Activated CD4-positive, alpha-beta memory T cell treated with anti-CD3 and anti-CD28 coated beads, Interleukin-2, amount 10 ng/mL, durations not matched to agents 7 days and 5 days (primary cell): ENCODE measurements at regions of chr6 and their contacts with region 1.

Region 1: DNA sequence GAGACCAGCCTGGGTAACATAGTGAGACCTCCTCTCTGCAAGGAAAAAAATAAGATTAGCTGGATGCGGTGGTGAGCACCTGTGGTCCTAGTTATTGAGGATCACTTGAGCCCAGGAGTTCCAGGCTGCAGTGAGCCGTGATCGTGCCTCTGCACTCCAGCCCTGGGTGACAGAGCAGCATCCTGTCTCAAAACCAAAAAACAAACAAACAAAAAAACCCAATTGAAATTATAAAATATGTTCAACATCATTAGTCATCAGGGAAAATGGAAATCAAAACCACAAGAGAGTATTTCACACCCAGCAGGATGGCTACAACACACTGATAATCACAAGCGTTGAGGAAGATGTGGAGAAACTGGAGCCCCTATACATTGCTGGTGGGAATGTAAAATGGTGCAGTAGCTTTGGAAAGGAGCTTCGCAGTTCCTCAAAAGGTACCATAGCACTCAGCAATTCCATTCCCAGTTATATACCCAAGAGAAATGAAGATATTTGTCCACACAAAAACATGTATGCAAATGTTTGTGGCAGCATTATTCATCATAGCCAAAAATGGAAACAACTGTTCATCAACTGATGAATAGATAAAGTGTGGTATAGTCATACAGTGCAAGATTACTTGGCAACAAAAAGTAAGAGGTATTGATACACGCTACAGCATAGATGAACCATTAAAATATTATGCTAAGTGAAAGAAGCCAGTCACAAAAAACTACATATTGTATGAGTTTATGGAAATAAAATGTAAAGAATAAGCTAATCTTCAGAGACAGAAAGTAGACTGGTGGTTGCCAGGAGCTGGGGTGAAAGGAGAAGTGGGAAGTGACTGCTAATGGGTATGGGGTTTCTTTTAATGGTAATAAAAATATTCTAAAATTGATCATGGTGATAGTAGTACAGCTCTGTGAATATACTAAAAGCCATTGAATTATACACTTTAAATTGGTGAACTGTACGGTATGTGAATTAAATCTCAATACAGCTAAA is 38.7 kb upstream of the RIPOR2 start:
- DNase-seq: peak; percentile 64
- H3K4me3 Mint-ChIP-seq: peak overlapping the region; percentile 32
- H3K27ac Mint-ChIP-seq: peak overlapping the region; percentile 85
- H3K4me1 Mint-ChIP-seq: peaks cover 37% of the 10 kb centered on the region
- H3K27me3 Mint-ChIP-seq: no peaks in the 10 kb centered on the region

Region 2: GRCh38 chr6:24855395-24856245 is 118.9 kb before region 1 on chr6:
- CTCF ChIA-PET with region 1: interaction called, 3 read pairs
- POLR2A ChIA-PET with region 1: interaction called, 11 read pairs
- DNase-seq: peak; percentile 75
- H3K4me3 Mint-ChIP-seq: no peak overlapping the region
- H3K27ac Mint-ChIP-seq: peak overlapping the region; percentile 90
- H3K4me1 Mint-ChIP-seq: peaks cover 55% of the 10 kb centered on the region
- H3K27me3 Mint-ChIP-seq: no peaks in the 10 kb centered on the region

Region 3: GRCh38 chr6:24960991-24961475 is 13.4 kb before region 1 on chr6:
- CTCF ChIA-PET with region 1: interaction called, 4 read pairs
- POLR2A ChIA-PET with region 1: interaction called, 18 read pairs
- DNase-seq: no peak
- H3K4me3 Mint-ChIP-seq: no peak overlapping the region
- H3K27ac Mint-ChIP-seq: peak overlapping the region; percentile 64
- H3K4me1 Mint-ChIP-seq: peaks cover 59% of the 10 kb centered on the region
- H3K27me3 Mint-ChIP-seq: no peaks in the 10 kb centered on the region

Region 4: DNA sequence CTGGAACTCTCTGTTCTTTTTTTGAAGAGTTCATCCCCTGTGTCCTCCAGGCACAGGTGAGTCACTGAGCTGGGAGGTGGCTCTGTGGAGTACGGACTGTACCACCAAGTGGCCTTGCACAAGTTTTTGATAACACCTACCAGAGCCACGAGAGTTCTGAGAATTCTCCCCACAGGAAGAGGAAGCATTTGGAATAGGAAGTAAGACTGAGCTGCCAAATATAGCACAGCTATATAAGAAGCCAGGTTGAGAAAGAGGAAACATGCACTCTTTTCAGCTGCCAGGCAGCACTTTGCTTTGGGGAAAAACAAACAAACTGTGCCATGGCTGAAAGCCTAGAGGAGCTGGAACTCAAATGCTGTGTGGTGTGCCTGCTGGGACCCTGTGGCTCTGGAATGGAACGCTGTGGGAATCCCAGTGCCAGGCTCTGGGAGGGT is 32.1 kb after region 1 on chr6:
- CTCF ChIA-PET with region 1: interaction called, 3 read pairs
- POLR2A ChIA-PET with region 1: interaction called, 26 read pairs
- DNase-seq: peak; percentile 75
- H3K4me3 Mint-ChIP-seq: peak overlapping the region; percentile 50
- H3K27ac Mint-ChIP-seq: peak overlapping the region; percentile 92
- H3K4me1 Mint-ChIP-seq: peaks cover 79% of the 10 kb centered on the region
- H3K27me3 Mint-ChIP-seq: no peaks in the 10 kb centered on the region

Region 5: GRCh38 chr6:25035527-25036435 is 61.3 kb after region 1 on chr6:
- CTCF ChIA-PET with region 1: no interaction called
- POLR2A ChIA-PET with region 1: interaction called, 12 read pairs
- DNase-seq: peak; percentile 45
- H3K4me3 Mint-ChIP-seq: peak overlapping the region; percentile 95
- H3K27ac Mint-ChIP-seq: peak overlapping the region; percentile 95
- H3K4me1 Mint-ChIP-seq: peaks cover 69% of the 10 kb centered on the region
- H3K27me3 Mint-ChIP-seq: no peaks in the 10 kb centered on the region